ENCODE measurements at regions of chr7 and their contacts with region 1.

Region 1: GRCh38 chr7:149838224-149838947 is at the start of gene ZNF862:
- DNase-seq: peak; percentile 92 to 98
- H3K4me3 ChIP-seq: peak within 1 kb of the TSS; percentile 84 to 94
- H3K27ac ChIP-seq: peak within 1 kb of the TSS; percentile 86 to 93
- H3K4me1 ChIP-seq: peaks cover 0 to 8% of the 10 kb centered on the region in 2 donors
- H3K27me3 ChIP-seq: no peaks in the 10 kb centered on the region
- CTCF ChIP-seq: no peak
- total RNA-seq, gene ZNF862: 1.7 TPM

Region 2: DNA sequence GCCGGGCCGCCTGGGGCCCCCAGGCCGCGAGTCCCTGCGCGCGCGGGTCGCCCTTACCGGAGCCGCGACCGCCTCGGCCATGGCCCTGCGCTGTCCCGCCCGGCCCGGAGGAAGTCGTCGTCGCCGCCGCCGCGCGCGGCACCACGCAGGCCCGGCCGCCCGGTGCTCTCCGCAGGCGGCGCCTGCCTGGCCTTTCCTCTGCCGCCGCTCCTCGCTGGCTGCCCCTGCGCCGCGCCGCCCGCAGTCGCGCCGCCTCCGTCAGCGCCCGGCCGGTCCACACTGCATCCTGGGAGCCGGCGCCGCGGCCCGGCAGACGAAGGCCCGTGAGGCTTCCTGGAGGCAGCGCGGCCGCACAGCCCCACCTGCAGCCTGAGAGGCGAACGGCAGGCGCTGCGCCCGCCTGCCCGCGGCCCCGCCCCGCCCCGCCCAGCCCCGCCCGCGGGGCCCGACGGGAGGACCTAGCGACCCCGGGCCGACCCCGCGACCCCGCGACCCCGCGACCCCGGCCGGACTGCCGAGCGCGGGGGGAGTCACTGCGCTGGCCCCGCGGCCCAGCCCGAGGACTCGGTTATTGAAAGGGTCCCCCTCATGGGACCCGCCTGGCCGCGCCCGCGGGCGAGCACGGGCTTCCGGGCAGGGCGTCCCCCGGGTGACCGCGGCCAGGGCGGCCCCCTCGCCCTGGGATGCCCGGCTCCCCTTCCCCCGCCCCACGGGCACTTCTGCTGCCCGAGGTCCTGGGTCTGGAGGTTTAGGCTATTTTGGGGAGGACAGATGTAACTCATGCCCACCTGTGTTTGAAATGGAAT is 340.7 kb before region 1 on chr7 and contains the start of gene ZNF746:
- intact Hi-C with region 1: loop called (anchors 5 kb)
- DNase-seq: peak; percentile 28 to 88
- H3K4me3 ChIP-seq: peak within 1 kb of the TSS; percentile 84 to 92
- H3K27ac ChIP-seq: peak within 1 kb of the TSS; percentile 87 to 89
- H3K4me1 ChIP-seq: peaks cover 6 to 11% of the 10 kb centered on the region in 2 donors
- H3K27me3 ChIP-seq: no peaks in the 10 kb centered on the region
- CTCF ChIP-seq: peak in 2 of 3 experiments; percentile 38 to 77
- total RNA-seq, gene ZNF746: 27.5 TPM

Region 3: GRCh38 chr7:149771721-149772240 is 66.6 kb before region 1 on chr7:
- intact Hi-C with region 1: loop called (anchors 1 kb)
- DNase-seq: peak; percentile 68 to 93
- H3K4me3 ChIP-seq: peak overlapping the region; percentile 83 to 87
- H3K27ac ChIP-seq: no peak overlapping the region
- H3K4me1 ChIP-seq: peaks cover 5 to 10% of the 10 kb centered on the region in 2 donors
- H3K27me3 ChIP-seq: no peaks in the 10 kb centered on the region
- CTCF ChIP-seq: no peak

Region 4: DNA sequence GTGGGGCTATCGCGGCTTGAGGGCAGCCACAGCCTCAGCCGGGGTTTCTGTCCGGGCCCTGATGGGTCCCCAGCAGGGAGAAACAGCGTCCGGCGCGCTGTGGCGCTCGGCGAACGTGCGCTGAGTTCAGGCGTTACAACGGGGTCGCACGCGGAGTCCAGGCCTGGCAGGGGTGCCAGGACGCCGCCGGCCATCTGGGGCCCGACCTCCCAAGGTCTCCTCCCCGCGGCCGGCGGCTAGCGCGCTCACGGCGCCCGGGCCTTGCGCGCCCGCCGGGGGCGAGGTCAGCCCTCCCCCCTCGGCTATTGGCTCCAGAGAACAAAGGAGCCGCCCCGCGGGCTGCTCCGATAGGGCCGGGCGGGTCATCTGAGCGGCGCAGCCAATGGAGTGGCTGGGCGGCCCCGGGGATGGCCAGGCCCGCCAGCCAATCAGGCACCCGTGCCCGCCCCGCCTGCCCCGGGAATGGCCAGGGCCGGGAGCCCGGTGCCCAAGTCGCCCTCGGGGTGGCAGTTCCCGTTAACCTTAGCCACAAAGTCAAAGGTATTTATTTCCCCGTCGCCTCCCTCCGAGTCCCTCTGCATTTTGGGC is 540.6 kb after region 1 on chr7 and contains the start of gene ZNF775:
- intact Hi-C with region 1: loop called (anchors 5 kb)
- DNase-seq: peak; percentile 88 to 98
- H3K4me3 ChIP-seq: peak within 1 kb of the TSS; percentile 61 to 93
- H3K27ac ChIP-seq: peak within 1 kb of the TSS; percentile 79 to 85
- H3K4me1 ChIP-seq: peaks cover 0 to 6% of the 10 kb centered on the region in 2 donors
- H3K27me3 ChIP-seq: no peaks in the 10 kb centered on the region
- CTCF ChIP-seq: no peak
- total RNA-seq, gene ZNF775: 17.1 TPM

Region 5: GRCh38 chr7:151028131-151028947 is 1190.0 kb after region 1 on chr7 and contains the start of gene ABCB8:
- intact Hi-C with region 1: loop called (anchors 10 kb)
- DNase-seq: peak; percentile 98 to 100
- H3K4me3 ChIP-seq: peak within 1 kb of the TSS; percentile 68 to 77
- H3K27ac ChIP-seq: peak within 1 kb of the TSS; percentile 60 to 78
- H3K4me1 ChIP-seq: peaks cover 0 to 7% of the 10 kb centered on the region in 2 donors
- H3K27me3 ChIP-seq: no peaks in the 10 kb centered on the region
- CTCF ChIP-seq: peak in 2 of 3 experiments; percentile 59 to 68
- total RNA-seq, gene ABCB8: 50.8 TPM

Measured in ascending aorta (tissue), 2 donors.